ENCODE measurements at regions of chr7 and their contacts with region 1.

Region 1: GRCh38 chr7:123748734-123749536 is at the start of gene WASL:
- DNase-seq: peak; percentile 81
- ATAC-seq: peak; percentile 84
- H3K4me3 ChIP-seq: peak within 1 kb of the TSS; percentile 94 to 99 (median 97)
- H3K27ac ChIP-seq: peak within 1 kb of the TSS; percentile 97
- H3K4me1 ChIP-seq: peaks cover 41% of the 10 kb centered on the region
- H3K27me3 ChIP-seq: no peaks in the 10 kb centered on the region; a peak in 1 of 5 replicates
- CTCF ChIP-seq: peak; percentile 36
- EP300 ChIP-seq: peak in 1 of 2 experiments; percentile 48; a peak in 1 of 4 replicates
- POLR2A ChIP-seq: peak; percentile 93 to 97
- RAD21 ChIP-seq: no peak
- total RNA-seq, gene WASL: 12.8 and 18.7 TPM in 2 replicates

Region 2: DNA sequence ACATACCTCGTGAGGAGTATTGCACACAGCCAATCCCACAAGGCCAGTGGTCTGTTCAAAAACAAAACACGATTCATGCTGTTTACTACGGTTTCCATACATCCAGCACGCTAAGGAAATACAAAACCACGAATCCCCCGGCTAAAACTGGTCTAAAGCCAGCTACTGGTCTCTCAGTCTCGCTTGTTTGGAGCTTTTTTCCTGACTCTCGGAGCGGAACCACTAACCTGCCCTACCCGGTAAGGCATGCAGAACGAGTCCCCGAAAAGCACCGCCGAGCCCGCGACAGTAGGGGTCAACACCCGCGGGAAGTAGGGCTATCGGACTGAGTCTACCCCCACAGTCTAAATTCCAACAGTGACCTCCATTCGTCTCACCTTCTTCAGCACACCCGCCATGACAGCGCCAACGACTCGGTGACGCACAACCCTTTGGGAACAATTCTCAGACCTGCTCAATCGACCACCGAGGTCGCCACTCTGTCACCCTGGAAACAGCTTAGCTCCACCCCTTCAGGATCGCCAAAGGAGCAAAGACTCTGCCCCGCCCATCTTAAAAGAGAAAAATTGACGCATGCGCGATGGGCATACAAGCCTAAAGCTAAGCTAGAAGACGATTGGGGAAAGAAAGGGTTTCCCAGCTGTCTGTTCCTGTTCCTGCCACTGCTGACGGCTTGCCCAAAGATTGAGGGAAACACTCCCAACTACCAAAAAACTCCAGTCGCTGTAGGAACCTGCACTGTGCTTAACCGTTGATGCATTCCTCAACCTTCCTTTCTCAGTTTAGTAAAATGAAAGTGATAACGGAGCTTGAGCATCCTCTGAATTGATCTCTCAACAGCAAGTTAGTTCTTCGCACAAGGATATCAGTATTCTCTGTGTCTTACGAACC is 191.3 kb before region 1 on chr7 and contains the start of gene NDUFA5:
- CTCF ChIA-PET with region 1: no interaction called
- POLR2A ChIA-PET with region 1: interaction called, 11 read pairs
- in situ Hi-C with region 1: no loop called
- intact Hi-C with region 1: loop called (anchors 10 kb)
- DNase-seq: peak; percentile 98
- ATAC-seq: peak; percentile 98
- H3K4me3 ChIP-seq: peak within 1 kb of the TSS; percentile 94 to 100 (median 98)
- H3K27ac ChIP-seq: peak within 1 kb of the TSS; percentile 89
- H3K4me1 ChIP-seq: peaks cover 23% of the 10 kb centered on the region
- H3K27me3 ChIP-seq: peaks cover 0 to 6% of the 10 kb centered on the region in 2 experiments; a peak in 1 of 5 replicates
- CTCF ChIP-seq: no peak
- EP300 ChIP-seq: no peak
- POLR2A ChIP-seq: peak; percentile 85 to 86
- RAD21 ChIP-seq: no peak
- total RNA-seq, gene NDUFA5: 55.9 and 79.6 TPM in 2 replicates

Region 3: DNA sequence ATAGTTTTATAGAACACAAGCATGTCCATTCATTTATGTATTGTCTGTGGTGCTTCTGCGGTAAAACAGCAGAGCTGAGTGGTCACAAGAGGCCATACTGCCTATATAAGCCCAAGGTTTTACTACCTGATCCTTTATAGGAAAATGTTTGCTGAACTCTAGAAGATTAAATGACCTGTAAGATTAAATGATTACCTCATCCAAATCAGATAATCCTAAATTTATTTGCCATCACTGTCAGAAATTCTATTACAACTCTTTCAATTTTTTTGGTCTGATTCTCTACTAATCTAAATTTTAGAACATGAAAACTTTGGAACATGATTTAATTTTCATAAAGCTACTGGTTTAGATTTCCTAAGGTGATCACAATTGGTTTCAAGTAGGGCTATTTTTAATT is 57.4 kb before region 1 on chr7:
- CTCF ChIA-PET with region 1: no interaction called
- POLR2A ChIA-PET with region 1: no interaction called
- in situ Hi-C with region 1: no loop called
- intact Hi-C with region 1: no loop called
- DNase-seq: no peak
- ATAC-seq: no peak
- H3K4me3 ChIP-seq: no peak overlapping the region
- H3K27ac ChIP-seq: no peak overlapping the region
- H3K4me1 ChIP-seq: no peaks in the 10 kb centered on the region
- H3K27me3 ChIP-seq: no peaks in the 10 kb centered on the region
- CTCF ChIP-seq: no peak
- EP300 ChIP-seq: no peak
- POLR2A ChIP-seq: no peak
- RAD21 ChIP-seq: no peak

Region 4: GRCh38 chr7:123727071-123727837 is 21.7 kb before region 1 on chr7:
- CTCF ChIA-PET with region 1: no interaction called
- POLR2A ChIA-PET with region 1: interaction called, 12 read pairs
- in situ Hi-C with region 1: no loop called
- intact Hi-C with region 1: loop called (anchors 1 kb)
- DNase-seq: peak; percentile 53
- ATAC-seq: peak; percentile 58
- H3K4me3 ChIP-seq: no peak overlapping the region
- H3K27ac ChIP-seq: peak overlapping the region; percentile 45
- H3K4me1 ChIP-seq: peaks cover 75% of the 10 kb centered on the region
- H3K27me3 ChIP-seq: no peaks in the 10 kb centered on the region
- CTCF ChIP-seq: no peak
- EP300 ChIP-seq: no peak; a peak in 1 of 4 replicates
- POLR2A ChIP-seq: no peak
- RAD21 ChIP-seq: no peak

Region 5: DNA sequence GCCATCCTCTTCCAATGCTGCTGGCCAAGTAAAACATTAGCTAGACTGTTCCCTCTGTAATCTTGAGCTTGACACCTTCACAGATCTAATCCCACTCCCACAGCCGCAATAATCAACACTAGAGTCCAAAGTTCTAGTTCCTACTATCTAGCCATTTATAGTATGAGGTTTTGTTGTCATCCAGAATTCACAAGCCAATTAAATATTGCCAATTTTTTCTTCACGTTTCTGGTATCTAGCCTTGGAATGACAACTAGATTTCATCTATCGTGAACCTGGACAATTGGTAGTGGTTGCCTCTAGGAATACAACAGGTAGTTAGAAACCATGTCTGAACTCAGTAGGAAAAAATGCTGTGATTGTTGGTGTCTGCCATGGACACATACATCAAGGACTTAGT is 10.6 kb before region 1 on chr7:
- CTCF ChIA-PET with region 1: no interaction called
- POLR2A ChIA-PET with region 1: interaction called, 46 read pairs
- in situ Hi-C with region 1: no loop called
- intact Hi-C with region 1: loop called (anchors 1 kb)
- DNase-seq: peak; percentile 87
- ATAC-seq: peak; percentile 99
- H3K4me3 ChIP-seq: peak overlapping the region in 1 of 3 experiments; percentile 30; a peak in 1 of 6 replicates
- H3K27ac ChIP-seq: peak overlapping the region; percentile 49
- H3K4me1 ChIP-seq: peaks cover 88% of the 10 kb centered on the region
- H3K27me3 ChIP-seq: no peaks in the 10 kb centered on the region
- CTCF ChIP-seq: no peak
- EP300 ChIP-seq: peak in 1 of 2 experiments; percentile 71; a peak in 2 of 4 replicates
- POLR2A ChIP-seq: no peak
- RAD21 ChIP-seq: no peak

Region 6: DNA sequence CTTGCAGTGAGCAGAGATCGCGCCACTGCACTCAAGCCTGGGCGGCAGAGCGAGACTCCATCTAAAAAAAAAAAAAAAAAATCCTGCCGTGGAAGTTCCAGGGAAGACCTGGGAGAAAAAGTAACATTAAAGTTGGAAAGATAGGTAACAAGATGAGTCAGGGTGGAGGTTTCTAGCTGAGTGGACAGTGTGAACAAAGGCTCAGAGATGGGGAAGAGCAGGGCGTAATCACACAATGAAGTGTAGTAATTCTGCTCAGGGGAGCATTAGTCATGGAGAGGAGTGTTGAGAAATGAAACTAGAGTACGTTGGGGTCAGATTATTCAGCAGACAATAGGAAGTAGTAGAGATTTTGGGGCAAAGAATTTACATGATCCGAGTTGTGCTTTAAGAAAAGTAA is 21.4 kb after region 1 on chr7:
- CTCF ChIA-PET with region 1: no interaction called
- POLR2A ChIA-PET with region 1: interaction called, 25 read pairs
- in situ Hi-C with region 1: no loop called
- intact Hi-C with region 1: no loop called
- DNase-seq: peak; percentile 25
- ATAC-seq: peak; percentile 73
- H3K4me3 ChIP-seq: no peak overlapping the region
- H3K27ac ChIP-seq: no peak overlapping the region
- H3K4me1 ChIP-seq: peaks cover 20% of the 10 kb centered on the region
- H3K27me3 ChIP-seq: no peaks in the 10 kb centered on the region
- CTCF ChIP-seq: no peak
- EP300 ChIP-seq: no peak
- POLR2A ChIP-seq: no peak
- RAD21 ChIP-seq: no peak

Measured in HepG2 (cell line).